Mucosa of descending colon (tissue), 3 donors: ENCODE measurements at regions of chr16 and their contacts with region 1.

Region 1: DNA sequence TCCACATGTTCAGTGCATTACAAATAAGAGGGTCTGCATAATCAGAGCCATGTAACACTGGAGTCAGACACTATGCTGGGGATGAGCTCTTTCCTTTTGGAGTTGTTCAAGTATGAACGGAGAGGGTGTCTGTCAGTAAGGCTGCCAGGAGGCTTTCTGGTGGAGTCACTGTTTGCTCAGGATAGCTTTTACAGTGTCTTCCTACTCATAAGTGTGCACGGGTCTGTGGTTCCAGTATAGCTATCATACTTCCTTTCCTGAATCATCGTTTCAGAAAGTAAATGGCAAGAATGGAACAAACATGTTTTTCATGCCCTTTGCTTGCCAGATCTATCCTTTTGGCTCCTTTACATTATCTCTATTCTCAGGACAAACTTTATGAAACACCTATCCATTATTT is 152.7 kb upstream of the CDH11 start:
- DNase-seq: no peak
- ATAC-seq: no peak
- H3K4me3 ChIP-seq: no peak overlapping the region
- H3K4me1 ChIP-seq: no peaks in the 10 kb centered on the region
- CTCF ChIP-seq: no peak

Region 2: DNA sequence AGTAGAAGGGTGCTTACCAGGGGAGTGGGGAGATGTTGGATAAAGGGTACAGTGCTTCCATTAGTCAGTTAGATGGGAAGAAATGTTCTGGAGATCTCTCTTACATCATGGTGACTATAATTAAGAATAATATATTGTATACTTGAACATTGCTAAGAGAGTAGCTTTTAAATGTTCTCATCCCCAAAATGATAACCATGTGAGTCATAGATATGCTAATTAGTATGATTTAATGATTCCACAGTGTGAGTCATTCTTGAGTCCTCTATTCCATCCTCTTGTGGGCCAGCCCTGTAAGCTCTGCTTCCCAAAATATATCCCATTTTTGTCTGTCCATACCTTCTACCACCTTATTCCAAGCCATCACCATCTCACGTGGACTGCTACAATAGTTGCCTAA is 72.1 kb before region 1 on chr16:
- intact Hi-C with region 1: loop called in 1 of 2 experiments (anchors 10 kb)
- DNase-seq: no peak
- ATAC-seq: no peak
- H3K4me3 ChIP-seq: no peak overlapping the region
- H3K4me1 ChIP-seq: no peaks in the 10 kb centered on the region
- CTCF ChIP-seq: no peak